ENCODE measurements at regions of chr12 and their contacts with region 1.

Region 1: DNA sequence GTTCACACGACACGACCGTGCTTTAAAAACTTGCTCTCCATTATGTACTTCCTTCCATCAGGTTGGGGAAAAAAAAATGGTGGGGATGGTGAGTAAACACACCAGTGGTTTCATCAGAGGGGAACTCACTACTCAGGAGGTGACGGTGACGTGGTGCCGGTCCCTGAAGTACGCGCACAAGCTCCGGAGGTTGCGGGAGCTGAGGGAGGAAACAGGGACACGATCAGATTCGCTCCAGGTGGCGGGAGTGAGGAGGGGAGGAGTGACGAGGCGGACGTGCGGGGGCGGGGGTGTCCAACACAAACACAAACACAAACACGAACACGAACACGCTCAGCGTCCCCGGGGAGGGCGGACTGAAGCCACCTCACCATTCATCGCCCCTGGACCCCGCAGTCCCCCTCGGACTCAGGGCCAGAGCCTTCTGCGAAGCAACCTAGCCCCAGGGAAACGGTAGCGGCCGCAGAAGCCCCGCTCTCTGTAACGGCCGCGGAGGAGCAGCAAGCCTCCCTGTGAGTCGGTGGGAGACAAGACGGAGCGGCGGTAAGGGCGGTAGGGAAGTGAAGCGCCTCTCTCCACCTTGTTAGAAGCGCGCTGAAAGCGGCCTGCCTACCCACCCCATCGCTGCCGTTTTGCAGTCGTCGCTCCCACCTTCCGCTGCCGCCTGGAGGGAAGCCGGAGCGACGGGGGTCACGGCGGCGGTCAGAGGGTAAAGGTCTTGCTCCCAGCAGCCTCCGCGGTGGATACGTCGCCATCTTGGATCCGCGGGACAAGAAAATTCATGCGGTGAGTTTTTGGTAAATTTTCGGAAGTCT is at the start of gene CNOT2:
- DNase-seq: peak; percentile 85
- H3K4me3 Mint-ChIP-seq: peak within 1 kb of the TSS; percentile 99
- H3K27ac Mint-ChIP-seq: peak within 1 kb of the TSS; percentile 99
- H3K4me1 Mint-ChIP-seq: peaks cover 61% of the 10 kb centered on the region
- H3K27me3 Mint-ChIP-seq: no peaks in the 10 kb centered on the region
- total RNA-seq, gene CNOT2: 69.0 and 73.2 TPM in 2 replicates

Region 2: GRCh38 chr12:69239352-69239921 is 1003.5 kb before region 1 on chr12 and contains the start of gene CPSF6:
- intact Hi-C with region 1: loop called (anchors 1 kb)
- DNase-seq: peak; percentile 94
- H3K4me3 Mint-ChIP-seq: peak within 1 kb of the TSS; percentile 100
- H3K27ac Mint-ChIP-seq: peak within 1 kb of the TSS; percentile 99
- H3K4me1 Mint-ChIP-seq: peaks cover 47% of the 10 kb centered on the region
- H3K27me3 Mint-ChIP-seq: peaks cover 7% of the 10 kb centered on the region
- total RNA-seq, gene CPSF6: 114 and 115 TPM in 2 replicates

Region 3: GRCh38 chr12:69585189-69586062 is 657.5 kb before region 1 on chr12 and contains the start of gene CCT2:
- intact Hi-C with region 1: loop called (anchors 2 kb)
- DNase-seq: peak; percentile 94
- H3K4me3 Mint-ChIP-seq: peak within 1 kb of the TSS; percentile 98
- H3K27ac Mint-ChIP-seq: peak within 1 kb of the TSS; percentile 97
- H3K4me1 Mint-ChIP-seq: peaks cover 11% of the 10 kb centered on the region
- H3K27me3 Mint-ChIP-seq: no peaks in the 10 kb centered on the region
- total RNA-seq, gene CCT2: 442 and 447 TPM in 2 replicates

Region 4: DNA sequence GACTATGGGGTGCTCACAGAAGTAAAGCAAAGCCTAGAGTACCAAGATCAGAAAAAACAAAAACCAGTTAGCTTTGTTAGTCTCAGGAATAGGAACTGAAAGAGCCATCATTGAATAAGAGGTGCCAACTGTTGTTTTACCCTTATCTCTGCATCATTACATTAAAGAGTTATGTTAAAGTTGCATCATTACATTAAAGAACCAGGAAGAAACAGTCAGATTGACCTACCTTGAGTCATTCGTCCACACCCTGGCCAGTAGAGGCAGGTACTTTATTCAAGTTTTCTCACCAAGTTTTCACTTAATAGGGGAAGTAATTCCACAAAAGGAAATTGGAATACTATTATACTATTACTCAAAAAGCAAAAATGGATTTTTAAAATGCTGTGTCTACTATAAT is 121.3 kb before region 1 on chr12:
- intact Hi-C with region 1: no loop called
- DNase-seq: no peak
- H3K4me3 Mint-ChIP-seq: no peak overlapping the region
- H3K27ac Mint-ChIP-seq: no peak overlapping the region
- H3K4me1 Mint-ChIP-seq: no peaks in the 10 kb centered on the region
- H3K27me3 Mint-ChIP-seq: no peaks in the 10 kb centered on the region

Region 5: GRCh38 chr12:70288817-70289216 is 45.9 kb after region 1 on chr12:
- intact Hi-C with region 1: loop called (anchors 5 kb)
- DNase-seq: no peak
- H3K4me3 Mint-ChIP-seq: no peak overlapping the region
- H3K27ac Mint-ChIP-seq: peak overlapping the region; percentile 27
- H3K4me1 Mint-ChIP-seq: peaks cover 6% of the 10 kb centered on the region
- H3K27me3 Mint-ChIP-seq: no peaks in the 10 kb centered on the region

Region 6: GRCh38 chr12:70365648-70366518 is 123.0 kb after region 1 on chr12 and contains the start of gene KCNMB4:
- intact Hi-C with region 1: loop called (anchors 1 kb)
- DNase-seq: peak; percentile 71
- H3K4me3 Mint-ChIP-seq: peak within 1 kb of the TSS; percentile 87
- H3K27ac Mint-ChIP-seq: peak within 1 kb of the TSS; percentile 63
- H3K4me1 Mint-ChIP-seq: peaks cover 20% of the 10 kb centered on the region
- H3K27me3 Mint-ChIP-seq: peaks cover 44% of the 10 kb centered on the region
- total RNA-seq, gene KCNMB4: 0.17 and 0.80 TPM in 2 replicates

Region 7: GRCh38 chr12:71685914-71686665 is 1443.2 kb after region 1 on chr12 and contains the start of gene TMEM19:
- intact Hi-C with region 1: loop called (anchors 2 kb)
- DNase-seq: peak; percentile 78
- H3K4me3 Mint-ChIP-seq: peak within 1 kb of the TSS; percentile 94
- H3K27ac Mint-ChIP-seq: peak within 1 kb of the TSS; percentile 93
- H3K4me1 Mint-ChIP-seq: peaks cover 23% of the 10 kb centered on the region
- H3K27me3 Mint-ChIP-seq: no peaks in the 10 kb centered on the region
- total RNA-seq, gene TMEM19: 10.6 and 11.3 TPM in 2 replicates

Region 8: DNA sequence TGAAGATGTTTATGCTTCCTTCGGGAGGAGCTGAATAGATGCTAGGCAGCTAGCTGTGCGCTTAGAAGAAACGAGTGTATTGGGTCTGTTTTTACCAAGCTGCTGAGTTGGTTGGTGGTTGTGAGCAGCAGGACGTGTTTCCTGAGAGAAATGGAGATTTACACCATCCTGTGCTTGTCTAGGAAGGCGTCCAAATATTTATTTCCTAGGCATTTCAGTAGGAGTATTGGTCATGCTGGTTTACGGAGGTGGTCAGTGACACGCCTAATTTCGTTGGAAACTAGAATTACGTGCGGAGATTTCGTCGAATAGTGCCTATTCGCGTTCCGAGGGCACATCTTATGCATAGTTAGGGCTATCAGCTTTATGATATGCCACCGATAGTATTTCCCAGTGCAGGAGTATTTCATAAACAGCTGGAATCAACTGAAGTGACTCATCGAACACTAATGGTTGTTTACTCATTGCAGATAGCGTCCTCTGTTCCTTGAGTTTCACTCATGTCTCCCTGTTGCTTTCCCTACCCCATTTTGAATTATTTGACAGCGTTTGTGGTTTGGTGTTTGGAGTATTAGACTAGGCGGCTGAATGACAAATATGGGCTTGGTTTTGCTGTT is 1597.4 kb after region 1 on chr12:
- intact Hi-C with region 1: loop called (anchors 5 kb)
- DNase-seq: peak; percentile 10
- H3K4me3 Mint-ChIP-seq: peak overlapping the region; percentile 90
- H3K27ac Mint-ChIP-seq: peak overlapping the region; percentile 92
- H3K4me1 Mint-ChIP-seq: peaks cover 34% of the 10 kb centered on the region
- H3K27me3 Mint-ChIP-seq: no peaks in the 10 kb centered on the region